ENCODE measurements at regions of chr19 and their contacts with region 1.

Region 1: DNA sequence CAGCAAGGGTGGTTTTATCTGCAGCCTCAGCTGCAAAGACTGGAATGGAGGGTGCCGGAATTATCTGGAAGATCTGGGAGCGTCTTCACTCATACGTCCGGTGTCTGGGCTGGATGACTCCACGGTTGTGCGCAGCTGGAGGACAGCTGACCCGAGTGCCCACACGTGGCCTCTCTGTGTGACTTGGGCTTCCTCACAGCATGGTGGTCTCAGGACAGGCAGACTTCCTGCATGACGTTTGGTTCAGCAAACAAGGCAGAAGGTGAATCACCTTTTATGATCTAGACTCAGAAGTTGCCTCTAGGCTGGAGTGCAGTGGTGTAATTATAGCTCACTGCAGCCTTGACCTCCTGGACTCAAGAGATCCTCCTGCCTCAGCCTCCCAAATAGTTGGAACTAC is 33.2 kb downstream of the CACNG6 start:
- DNase-seq: peak in 1 of 10 donors; percentile 32

Region 2: DNA sequence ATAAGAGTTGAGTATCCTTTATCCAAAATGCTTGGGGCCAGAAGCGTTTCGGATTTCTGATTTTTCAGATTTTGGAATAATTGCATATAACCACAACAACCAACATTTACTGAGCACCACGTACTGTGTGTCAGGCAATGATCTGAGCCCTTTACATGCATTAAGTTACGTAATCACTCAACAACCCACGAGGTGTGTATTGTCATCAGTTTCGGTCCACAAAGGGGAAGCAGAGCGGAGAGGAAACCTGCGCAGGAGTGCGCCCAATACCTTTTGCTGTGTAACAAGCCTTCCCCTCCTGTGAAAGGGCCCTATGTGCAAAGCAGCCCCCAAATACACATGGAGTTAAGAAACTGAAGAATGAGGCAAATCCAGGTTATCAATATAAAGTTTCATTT is 179.8 kb before region 1 on chr19:
- intact Hi-C with region 1: loop called (anchors 1 kb)
- DNase-seq: no peak

Region 3: GRCh38 chr19:53906211-53907192 is 118.2 kb before region 1 on chr19:
- intact Hi-C with region 1: loop called (anchors 1 kb)
- DNase-seq: peak; percentile 60 to 95 (median 79)